Activated CD4-positive, alpha-beta T cell treated with anti-CD3 and anti-CD28 coated beads for 36 hours (primary cell): ENCODE measurements at regions of chr10 and their contacts with region 1.

Region 1: GRCh38 chr10:58268870-58269605 is at the start of gene CISD1:
- DNase-seq: peak; percentile 96
- ATAC-seq: peak; percentile 76
- H3K4me3 Mint-ChIP-seq: peak within 1 kb of the TSS; percentile 99
- H3K27ac Mint-ChIP-seq: peak within 1 kb of the TSS; percentile 92
- H3K4me1 Mint-ChIP-seq: peaks cover 29% of the 10 kb centered on the region
- H3K27me3 Mint-ChIP-seq: no peaks in the 10 kb centered on the region
- total RNA-seq, gene CISD1: 29.9 to 49.2 TPM

Region 2: DNA sequence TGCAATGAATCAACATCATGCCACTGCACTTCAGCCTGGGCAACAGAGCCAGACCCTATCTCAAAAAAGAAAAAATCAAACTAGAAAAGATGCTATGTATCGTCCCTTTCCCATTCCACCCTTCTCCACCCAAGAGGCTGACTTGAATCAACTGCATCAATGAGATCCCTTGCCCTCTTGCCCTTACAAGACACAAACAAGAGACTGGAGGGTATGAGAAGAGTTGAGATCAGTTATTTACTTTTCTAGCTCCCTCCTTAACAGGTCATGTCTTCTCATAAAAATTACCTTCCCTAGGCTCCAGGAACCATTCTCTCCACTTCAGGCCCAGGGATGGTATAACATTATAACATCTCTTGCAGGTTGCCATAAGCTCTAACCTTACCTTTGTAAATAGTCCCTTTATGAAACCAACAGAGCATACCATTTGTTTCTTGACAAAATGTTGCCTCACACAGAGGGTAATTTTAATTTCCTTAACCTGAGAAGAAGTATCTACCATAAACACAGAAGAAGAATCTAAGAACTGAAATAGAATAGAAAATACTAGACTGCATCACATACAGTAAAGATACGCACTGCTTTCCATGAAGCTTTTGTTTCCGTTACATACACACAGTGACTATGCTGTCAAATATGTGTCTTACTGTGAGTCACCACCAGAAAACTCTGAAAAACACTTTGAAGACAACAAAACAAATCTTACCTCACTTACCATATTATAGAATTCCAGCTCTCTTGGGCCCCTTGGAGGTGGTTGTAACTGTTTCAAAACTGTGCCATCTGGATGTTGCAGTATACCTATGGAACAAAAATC is 31.8 kb before region 1 on chr10:
- CTCF ChIA-PET with region 1: interaction called, 5 read pairs
- POLR2A ChIA-PET with region 1: interaction called, 4 read pairs
- intact Hi-C with region 1: loop called in 1 of 2 experiments (anchors 1 kb)
- DNase-seq: peak; percentile 8
- ATAC-seq: peak; percentile 90
- H3K4me3 Mint-ChIP-seq: no peak overlapping the region
- H3K27ac Mint-ChIP-seq: peak overlapping the region; percentile 79
- H3K4me1 Mint-ChIP-seq: peaks cover 49% of the 10 kb centered on the region
- H3K27me3 Mint-ChIP-seq: no peaks in the 10 kb centered on the region

Region 3: GRCh38 chr10:58254644-58255043 is 14.4 kb before region 1 on chr10:
- CTCF ChIA-PET with region 1: no interaction called
- POLR2A ChIA-PET with region 1: no interaction called
- intact Hi-C with region 1: no loop called
- DNase-seq: no peak
- ATAC-seq: peak; percentile 33
- H3K4me3 Mint-ChIP-seq: no peak overlapping the region
- H3K27ac Mint-ChIP-seq: no peak overlapping the region
- H3K4me1 Mint-ChIP-seq: peaks cover 24% of the 10 kb centered on the region
- H3K27me3 Mint-ChIP-seq: no peaks in the 10 kb centered on the region

Region 4: DNA sequence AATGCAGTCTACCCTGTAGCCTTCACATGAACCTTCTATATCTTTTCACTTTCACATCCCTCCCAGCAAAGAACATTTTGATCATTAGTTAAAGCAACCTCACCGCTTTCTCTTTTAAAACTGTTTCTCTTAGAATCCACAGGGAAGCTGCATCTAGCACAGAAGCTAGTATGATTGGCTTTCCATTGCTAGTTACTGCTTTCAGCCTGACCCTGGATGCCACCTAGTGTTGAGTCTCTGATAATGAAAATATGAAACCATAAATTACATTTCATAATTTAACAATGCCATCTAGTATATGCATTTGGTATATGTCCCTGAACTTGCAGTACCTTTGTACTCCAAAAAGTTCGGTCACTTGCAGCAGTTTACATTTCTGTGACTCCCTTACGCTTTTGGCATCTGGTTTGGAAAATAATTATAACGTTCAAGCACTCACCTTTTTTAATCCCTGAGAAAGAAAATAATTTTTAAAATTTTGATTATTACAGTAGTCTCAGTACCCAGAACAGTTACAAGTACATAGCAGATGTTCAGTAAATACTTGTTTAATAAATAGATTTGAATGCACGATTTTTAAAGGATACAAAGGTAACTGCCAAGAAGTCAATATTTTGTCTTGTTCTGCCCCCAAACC is 22.6 kb after region 1 on chr10:
- CTCF ChIA-PET with region 1: interaction called, 12 read pairs
- POLR2A ChIA-PET with region 1: no interaction called
- intact Hi-C with region 1: no loop called
- DNase-seq: peak; percentile 50
- ATAC-seq: peak; percentile 71
- H3K4me3 Mint-ChIP-seq: no peak overlapping the region
- H3K27ac Mint-ChIP-seq: no peak overlapping the region
- H3K4me1 Mint-ChIP-seq: no peaks in the 10 kb centered on the region
- H3K27me3 Mint-ChIP-seq: no peaks in the 10 kb centered on the region

Region 5: DNA sequence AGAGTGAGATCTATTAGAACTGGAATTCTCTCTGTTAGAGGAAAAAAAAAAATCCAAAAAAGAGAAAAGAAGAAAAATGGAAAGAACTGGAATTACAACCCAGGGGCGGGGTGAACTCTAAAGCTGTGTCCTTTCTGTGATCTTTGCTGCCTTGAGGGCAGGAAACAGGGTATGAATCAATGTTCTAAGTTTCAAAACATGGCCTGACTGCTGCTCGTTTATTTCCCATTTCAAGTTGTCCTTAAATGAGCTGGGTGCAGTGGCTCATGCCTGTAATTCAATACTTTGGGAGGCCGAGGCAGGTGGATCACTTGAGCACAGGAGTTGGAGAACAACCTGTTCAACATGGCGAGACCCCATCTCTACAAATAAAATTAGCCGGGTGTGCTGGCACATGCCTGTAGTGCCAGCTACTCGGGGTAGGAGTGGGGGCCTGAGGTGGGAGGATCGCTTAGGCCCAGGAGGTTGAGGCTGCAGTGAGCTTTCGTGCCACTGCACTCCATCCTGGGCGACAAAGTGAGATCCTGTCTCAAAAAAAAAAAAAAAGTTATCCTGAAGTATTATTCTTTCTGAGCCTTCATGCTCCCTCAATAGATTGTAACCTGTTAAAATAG is 91.5 kb after region 1 on chr10:
- CTCF ChIA-PET with region 1: no interaction called
- POLR2A ChIA-PET with region 1: interaction called, 14 read pairs
- intact Hi-C with region 1: no loop called
- DNase-seq: peak; percentile 3
- ATAC-seq: peak; percentile 76
- H3K4me3 Mint-ChIP-seq: no peak overlapping the region
- H3K27ac Mint-ChIP-seq: no peak overlapping the region
- H3K4me1 Mint-ChIP-seq: peaks cover 29% of the 10 kb centered on the region
- H3K27me3 Mint-ChIP-seq: no peaks in the 10 kb centered on the region

Region 6: DNA sequence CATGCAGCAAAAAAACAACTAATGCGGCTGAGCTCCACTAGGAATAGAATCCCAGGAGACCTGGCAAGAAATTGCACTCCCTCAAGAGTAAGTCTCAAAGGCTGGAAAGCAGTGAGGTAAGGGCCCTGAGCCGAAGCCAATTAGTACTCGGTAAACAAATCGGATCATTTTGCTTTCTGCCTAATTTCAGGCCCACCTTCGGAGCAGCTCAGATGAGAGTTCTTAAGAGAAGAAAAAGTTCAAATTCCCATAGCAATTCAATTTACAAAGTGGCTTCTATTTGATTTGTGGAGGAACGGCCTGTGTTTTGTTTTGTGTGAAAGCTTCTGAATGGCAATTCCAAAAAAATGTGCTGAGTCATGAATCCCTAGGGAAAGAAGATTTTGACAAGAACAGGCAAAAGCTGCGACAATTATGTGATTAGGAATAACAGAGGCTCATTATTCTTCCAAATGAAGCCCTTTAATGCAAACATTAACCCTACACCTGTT is 1379.7 kb after region 1 on chr10:
- CTCF ChIA-PET with region 1: no interaction called
- POLR2A ChIA-PET with region 1: no interaction called
- intact Hi-C with region 1: no loop called
- DNase-seq: no peak
- ATAC-seq: no peak
- H3K4me3 Mint-ChIP-seq: no peak overlapping the region
- H3K27ac Mint-ChIP-seq: no peak overlapping the region
- H3K4me1 Mint-ChIP-seq: no peaks in the 10 kb centered on the region
- H3K27me3 Mint-ChIP-seq: no peaks in the 10 kb centered on the region